ENCODE measurements at regions of chr14 and their contacts with region 1.

Region 1: GRCh38 chr14:35046048-35046741 is at the start of gene FAM177A1:
- DNase-seq: peak; percentile 89 to 100 (median 98)
- ATAC-seq: peak; percentile 94
- H3K4me3 ChIP-seq: peak within 1 kb of the TSS; percentile 80
- H3K4me3 Mint-ChIP-seq: peak within 1 kb of the TSS; percentile 88 to 99 (median 93)
- H3K27ac ChIP-seq: peak within 1 kb of the TSS; percentile 99
- H3K27ac Mint-ChIP-seq: peak within 1 kb of the TSS; percentile 96 to 100 (median 99)
- H3K4me1 ChIP-seq: peaks cover 11 to 19% of the 10 kb centered on the region in 2 donors
- H3K4me1 Mint-ChIP-seq: peaks cover 13 to 39% (median 34%) of the 10 kb centered on the region in 7 donors
- H3K27me3 ChIP-seq: no peaks in the 10 kb centered on the region
- H3K27me3 Mint-ChIP-seq: no peaks in the 10 kb centered on the region
- total RNA-seq, gene FAM177A1: 34.3 to 135 (median 41.7) TPM

Region 2: GRCh38 chr14:34629657-34630529 is 416.3 kb before region 1 on chr14 and contains the start of gene SNX6:
- CTCF ChIA-PET with region 1: no interaction called
- POLR2A ChIA-PET with region 1: no interaction called
- intact Hi-C with region 1: loop called (anchors 1 kb)
- DNase-seq: peak; percentile 75 to 87 (median 83)
- ATAC-seq: peak; percentile 100
- H3K4me3 ChIP-seq: peak within 1 kb of the TSS; percentile 72
- H3K4me3 Mint-ChIP-seq: peak within 1 kb of the TSS; percentile 89 to 100 (median 98)
- H3K27ac ChIP-seq: peak within 1 kb of the TSS; percentile 98
- H3K27ac Mint-ChIP-seq: peak within 1 kb of the TSS; percentile 92 to 97 (median 96)
- H3K4me1 ChIP-seq: peaks cover 17 to 20% of the 10 kb centered on the region in 2 donors
- H3K4me1 Mint-ChIP-seq: peaks cover 6 to 49% (median 33%) of the 10 kb centered on the region in 7 donors
- H3K27me3 ChIP-seq: no peaks in the 10 kb centered on the region
- H3K27me3 Mint-ChIP-seq: peaks cover 0 to 18% (median 0%) of the 10 kb centered on the region in 5 donors
- total RNA-seq, gene SNX6: 56.6 to 78.9 (median 59.7) TPM

Region 3: DNA sequence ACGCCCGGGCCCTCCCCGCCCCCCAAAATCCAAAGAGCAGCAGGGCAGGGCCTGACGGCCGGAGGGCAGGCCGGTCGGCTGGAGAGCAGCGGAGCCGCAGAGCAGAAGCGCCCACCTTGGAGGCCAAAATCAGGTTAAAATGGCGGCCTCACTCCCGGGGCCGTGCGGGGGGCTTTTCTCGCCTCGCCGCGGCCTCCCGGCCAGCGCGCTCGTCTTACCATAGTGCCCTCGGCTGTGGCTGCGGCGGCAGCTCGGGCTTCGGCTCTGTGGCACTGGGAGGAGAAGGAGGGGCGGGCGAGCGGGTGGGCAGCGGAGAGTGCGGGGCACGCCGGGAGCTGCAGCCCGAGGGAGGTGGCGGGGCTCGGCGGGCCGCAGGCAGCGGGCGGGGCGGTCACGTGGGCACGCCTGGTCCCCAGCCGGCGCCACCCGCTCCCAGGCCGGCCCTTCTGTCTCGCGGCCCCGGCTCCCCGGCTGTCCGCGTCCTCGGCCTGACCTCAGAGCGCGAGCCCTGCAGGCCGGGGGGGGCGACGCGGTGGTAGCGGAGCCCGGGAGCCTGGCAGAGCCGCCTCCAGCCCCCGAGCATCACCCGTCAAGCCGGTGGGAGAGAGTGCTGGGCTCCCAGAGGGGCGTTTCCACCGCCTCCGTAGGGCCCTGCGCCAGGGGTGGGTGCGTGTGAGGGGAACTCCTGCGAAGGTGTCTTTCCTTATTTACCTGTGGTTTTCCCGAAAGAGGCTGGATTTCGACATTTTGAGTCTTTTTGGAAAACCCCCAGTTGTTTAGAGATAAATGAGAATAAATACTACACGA is 331.7 kb before region 1 on chr14 and contains the start of gene CFL2:
- CTCF ChIA-PET with region 1: no interaction called
- POLR2A ChIA-PET with region 1: no interaction called
- intact Hi-C with region 1: loop called in 1 of 2 experiments (anchors 2 kb)
- DNase-seq: peak; percentile 41 to 85 (median 54)
- ATAC-seq: peak; percentile 86
- H3K4me3 ChIP-seq: peak within 1 kb of the TSS; percentile 62
- H3K4me3 Mint-ChIP-seq: peak within 1 kb of the TSS; percentile 89 to 97 (median 92)
- H3K27ac ChIP-seq: peak within 1 kb of the TSS; percentile 93
- H3K27ac Mint-ChIP-seq: peak within 1 kb of the TSS; percentile 85 to 95 (median 92)
- H3K4me1 ChIP-seq: peaks cover 4 to 6% of the 10 kb centered on the region in 2 donors
- H3K4me1 Mint-ChIP-seq: peaks cover 8 to 39% (median 27%) of the 10 kb centered on the region in 7 donors
- H3K27me3 ChIP-seq: no peaks in the 10 kb centered on the region
- H3K27me3 Mint-ChIP-seq: peaks cover 0 to 20% (median 0%) of the 10 kb centered on the region in 5 donors
- total RNA-seq, gene CFL2: 5.2 to 34.2 (median 11.7) TPM

Region 4: DNA sequence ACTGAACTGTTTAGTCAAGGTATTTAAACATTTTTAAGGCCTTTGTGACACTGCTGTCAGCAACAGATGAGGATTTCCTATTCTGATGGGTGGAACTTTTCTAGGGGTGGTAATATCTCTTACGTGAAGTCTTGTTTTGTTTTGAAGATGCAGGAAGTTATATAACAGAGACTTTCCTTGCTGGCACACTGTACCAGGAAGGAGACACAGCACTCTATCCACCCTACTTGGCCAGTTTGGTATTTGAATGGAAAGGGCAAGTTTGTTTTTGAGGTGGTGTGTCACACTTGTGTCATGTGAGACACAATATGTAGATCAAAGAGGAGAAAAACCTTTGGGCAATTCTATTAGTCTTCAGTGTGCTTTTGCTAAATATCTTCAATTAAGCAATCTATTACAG is 115.0 kb before region 1 on chr14:
- CTCF ChIA-PET with region 1: no interaction called
- POLR2A ChIA-PET with region 1: interaction called, 6 read pairs
- intact Hi-C with region 1: loop called (anchors 1 kb)
- DNase-seq: peak in 7 of 9 donors; percentile 69 to 89 (median 83)
- ATAC-seq: peak; percentile 95
- H3K4me3 ChIP-seq: peak overlapping the region; percentile 22
- H3K4me3 Mint-ChIP-seq: peak overlapping the region; percentile 31 to 87 (median 76)
- H3K27ac ChIP-seq: peak overlapping the region; percentile 84
- H3K27ac Mint-ChIP-seq: peak overlapping the region; percentile 96 to 100 (median 98)
- H3K4me1 ChIP-seq: peaks cover 28 to 30% of the 10 kb centered on the region in 2 donors
- H3K4me1 Mint-ChIP-seq: peaks cover 15 to 44% (median 37%) of the 10 kb centered on the region in 7 donors
- H3K27me3 ChIP-seq: no peaks in the 10 kb centered on the region
- H3K27me3 Mint-ChIP-seq: no peaks in the 10 kb centered on the region

Region 5: GRCh38 chr14:35079742-35080141 is 33.5 kb after region 1 on chr14:
- CTCF ChIA-PET with region 1: interaction called, 3 read pairs
- POLR2A ChIA-PET with region 1: interaction called, 3 read pairs
- intact Hi-C with region 1: loop called in 1 of 2 experiments (anchors 5 kb)
- DNase-seq: no peak
- ATAC-seq: no peak
- H3K4me3 ChIP-seq: no peak overlapping the region
- H3K4me3 Mint-ChIP-seq: no peak overlapping the region
- H3K27ac ChIP-seq: no peak overlapping the region
- H3K27ac Mint-ChIP-seq: no peak overlapping the region
- H3K4me1 ChIP-seq: no peaks in the 10 kb centered on the region
- H3K4me1 Mint-ChIP-seq: no peaks in the 10 kb centered on the region
- H3K27me3 ChIP-seq: no peaks in the 10 kb centered on the region
- H3K27me3 Mint-ChIP-seq: no peaks in the 10 kb centered on the region

Region 6: GRCh38 chr14:35140718-35141581 is 94.8 kb after region 1 on chr14:
- CTCF ChIA-PET with region 1: no interaction called
- POLR2A ChIA-PET with region 1: no interaction called
- intact Hi-C with region 1: no loop called
- DNase-seq: peak in 4 of 9 donors; percentile 24 to 57 (median 40)
- ATAC-seq: peak; percentile 69
- H3K4me3 ChIP-seq: no peak overlapping the region
- H3K4me3 Mint-ChIP-seq: no peak overlapping the region
- H3K27ac ChIP-seq: peak overlapping the region; percentile 40
- H3K27ac Mint-ChIP-seq: peak overlapping the region in 6 of 9 donors; percentile 65 to 91 (median 75)
- H3K4me1 ChIP-seq: no peaks in the 10 kb centered on the region
- H3K4me1 Mint-ChIP-seq: peaks cover 2 to 26% (median 17%) of the 10 kb centered on the region in 7 donors
- H3K27me3 ChIP-seq: no peaks in the 10 kb centered on the region
- H3K27me3 Mint-ChIP-seq: no peaks in the 10 kb centered on the region

Region 7: GRCh38 chr14:35416108-35416750 is 370.0 kb after region 1 on chr14:
- CTCF ChIA-PET with region 1: interaction called, 3 read pairs
- POLR2A ChIA-PET with region 1: interaction called, 3 read pairs
- intact Hi-C with region 1: loop called (anchors 1 to 2 kb)
- DNase-seq: peak in 6 of 9 donors; percentile 18 to 80 (median 30)
- ATAC-seq: peak; percentile 67
- H3K4me3 ChIP-seq: no peak overlapping the region
- H3K4me3 Mint-ChIP-seq: peak overlapping the region; percentile 46 to 81 (median 72)
- H3K27ac ChIP-seq: peak overlapping the region; percentile 73
- H3K27ac Mint-ChIP-seq: peak overlapping the region; percentile 76 to 95 (median 92)
- H3K4me1 ChIP-seq: peaks cover 31 to 32% of the 10 kb centered on the region in 2 donors
- H3K4me1 Mint-ChIP-seq: peaks cover 29 to 48% (median 45%) of the 10 kb centered on the region in 7 donors
- H3K27me3 ChIP-seq: no peaks in the 10 kb centered on the region
- H3K27me3 Mint-ChIP-seq: peaks cover 0 to 7% (median 0%) of the 10 kb centered on the region in 5 donors

Region 8: GRCh38 chr14:35826218-35826951 is 780.2 kb after region 1 on chr14 and contains the start of gene BRMS1L:
- CTCF ChIA-PET with region 1: no interaction called
- POLR2A ChIA-PET with region 1: no interaction called
- intact Hi-C with region 1: loop called in 1 of 2 experiments (anchors 5 kb)
- DNase-seq: peak; percentile 88 to 97 (median 96)
- ATAC-seq: peak; percentile 99
- H3K4me3 ChIP-seq: peak within 1 kb of the TSS; percentile 95
- H3K4me3 Mint-ChIP-seq: peak within 1 kb of the TSS; percentile 84 to 96 (median 90)
- H3K27ac ChIP-seq: peak within 1 kb of the TSS; percentile 87
- H3K27ac Mint-ChIP-seq: peak within 1 kb of the TSS; percentile 53 to 94 (median 88)
- H3K4me1 ChIP-seq: peaks cover 6 to 8% of the 10 kb centered on the region in 2 donors
- H3K4me1 Mint-ChIP-seq: peaks cover 11 to 31% (median 25%) of the 10 kb centered on the region in 7 donors
- H3K27me3 ChIP-seq: no peaks in the 10 kb centered on the region
- H3K27me3 Mint-ChIP-seq: no peaks in the 10 kb centered on the region
- total RNA-seq, gene BRMS1L: 4.2 to 8.6 (median 5.8) TPM